Naive thymus-derived CD4-positive, alpha-beta T cell (primary cell): ENCODE measurements at regions of chr18 and their contacts with region 1.

Region 1: GRCh38 chr18:50009773-50010335 is 185.1 kb downstream of the MYO5B start:
- DNase-seq: peak in 7 of 9 donors; percentile 2 to 42 (median 20)
- ATAC-seq: peak; percentile 73
- H3K4me3 ChIP-seq: no peak overlapping the region
- H3K4me3 Mint-ChIP-seq: no peak overlapping the region
- H3K27ac ChIP-seq: no peak overlapping the region
- H3K27ac Mint-ChIP-seq: no peak overlapping the region
- H3K4me1 ChIP-seq: no peaks in the 10 kb centered on the region
- H3K4me1 Mint-ChIP-seq: no peaks in the 10 kb centered on the region
- H3K27me3 ChIP-seq: no peaks in the 10 kb centered on the region
- H3K27me3 Mint-ChIP-seq: peaks cover 0 to 17% (median 0%) of the 10 kb centered on the region in 5 donors

Region 2: DNA sequence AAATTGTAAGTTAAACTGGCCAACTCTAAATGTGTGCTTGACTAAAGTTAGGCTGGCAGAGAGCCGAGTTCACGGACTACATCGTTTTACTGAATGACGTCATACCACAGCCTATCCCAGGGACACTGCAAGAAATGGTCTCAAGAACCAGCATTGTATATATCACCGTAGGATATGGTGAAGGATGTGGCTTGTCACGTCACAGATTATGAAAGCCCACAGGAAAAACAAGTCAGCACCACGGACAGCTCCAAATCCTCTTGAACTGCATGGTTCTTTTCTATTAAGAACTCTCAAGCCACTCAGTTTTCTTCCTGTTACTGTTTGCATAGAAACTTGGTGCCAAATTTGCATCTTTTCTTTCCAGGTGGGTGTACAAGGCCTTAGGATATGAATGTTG is 111.4 kb before region 1 on chr18:
- CTCF ChIA-PET with region 1: no interaction called
- POLR2A ChIA-PET with region 1: no interaction called
- intact Hi-C with region 1: no loop called
- DNase-seq: peak; percentile 18 to 69 (median 56)
- ATAC-seq: peak; percentile 68
- H3K4me3 ChIP-seq: no peak overlapping the region
- H3K4me3 Mint-ChIP-seq: no peak overlapping the region
- H3K27ac ChIP-seq: no peak overlapping the region
- H3K27ac Mint-ChIP-seq: no peak overlapping the region
- H3K4me1 ChIP-seq: no peaks in the 10 kb centered on the region
- H3K4me1 Mint-ChIP-seq: no peaks in the 10 kb centered on the region
- H3K27me3 ChIP-seq: no peaks in the 10 kb centered on the region
- H3K27me3 Mint-ChIP-seq: peaks cover 0 to 18% (median 4%) of the 10 kb centered on the region in 5 donors

Region 3: GRCh38 chr18:50099725-50100407 is 90.0 kb after region 1 on chr18:
- CTCF ChIA-PET with region 1: no interaction called
- POLR2A ChIA-PET with region 1: no interaction called
- intact Hi-C with region 1: no loop called
- DNase-seq: no peak
- ATAC-seq: no peak
- H3K4me3 ChIP-seq: no peak overlapping the region
- H3K4me3 Mint-ChIP-seq: no peak overlapping the region
- H3K27ac ChIP-seq: no peak overlapping the region
- H3K27ac Mint-ChIP-seq: no peak overlapping the region
- H3K4me1 ChIP-seq: no peaks in the 10 kb centered on the region
- H3K4me1 Mint-ChIP-seq: peaks cover 0 to 2% (median 0%) of the 10 kb centered on the region in 7 donors
- H3K27me3 ChIP-seq: no peaks in the 10 kb centered on the region
- H3K27me3 Mint-ChIP-seq: peaks cover 4 to 41% (median 17%) of the 10 kb centered on the region in 5 donors

Region 4: GRCh38 chr18:50194631-50195532 is 185.0 kb after region 1 on chr18 and contains the start of gene MYO5B:
- CTCF ChIA-PET with region 1: no interaction called
- POLR2A ChIA-PET with region 1: no interaction called
- intact Hi-C with region 1: loop called in 1 of 2 experiments (anchors 2 kb)
- DNase-seq: peak in 7 of 9 donors; percentile 29 to 70 (median 42)
- ATAC-seq: peak; percentile 90
- H3K4me3 ChIP-seq: peak within 1 kb of the TSS; percentile 13
- H3K4me3 Mint-ChIP-seq: peak within 1 kb of the TSS; percentile 39 to 82 (median 66)
- H3K27ac ChIP-seq: no peak within 1 kb of the TSS
- H3K27ac Mint-ChIP-seq: peak within 1 kb of the TSS in 1 of 9 donors; percentile 59
- H3K4me1 ChIP-seq: peaks cover 0 to 5% of the 10 kb centered on the region in 2 donors
- H3K4me1 Mint-ChIP-seq: peaks cover 6 to 20% (median 17%) of the 10 kb centered on the region in 7 donors
- H3K27me3 ChIP-seq: peaks cover 0 to 18% of the 10 kb centered on the region in 2 donors
- H3K27me3 Mint-ChIP-seq: peaks cover 62 to 79% (median 72%) of the 10 kb centered on the region in 5 donors
- total RNA-seq, gene MYO5B: not detected

Region 5: GRCh38 chr18:50203801-50204604 is 194.1 kb after region 1 on chr18:
- CTCF ChIA-PET with region 1: no interaction called
- POLR2A ChIA-PET with region 1: no interaction called
- intact Hi-C with region 1: loop called in 1 of 2 experiments (anchors 2 kb)
- DNase-seq: peak in 2 of 9 donors; percentile 17 to 28
- ATAC-seq: no peak
- H3K4me3 ChIP-seq: no peak overlapping the region
- H3K4me3 Mint-ChIP-seq: peak overlapping the region in 6 of 10 donors; percentile 20 to 61 (median 32)
- H3K27ac ChIP-seq: no peak overlapping the region
- H3K27ac Mint-ChIP-seq: no peak overlapping the region
- H3K4me1 ChIP-seq: no peaks in the 10 kb centered on the region
- H3K4me1 Mint-ChIP-seq: peaks cover 5 to 12% (median 9%) of the 10 kb centered on the region in 7 donors
- H3K27me3 ChIP-seq: peaks cover 0 to 3% of the 10 kb centered on the region in 2 donors
- H3K27me3 Mint-ChIP-seq: peaks cover 48 to 61% (median 57%) of the 10 kb centered on the region in 5 donors

Region 6: DNA sequence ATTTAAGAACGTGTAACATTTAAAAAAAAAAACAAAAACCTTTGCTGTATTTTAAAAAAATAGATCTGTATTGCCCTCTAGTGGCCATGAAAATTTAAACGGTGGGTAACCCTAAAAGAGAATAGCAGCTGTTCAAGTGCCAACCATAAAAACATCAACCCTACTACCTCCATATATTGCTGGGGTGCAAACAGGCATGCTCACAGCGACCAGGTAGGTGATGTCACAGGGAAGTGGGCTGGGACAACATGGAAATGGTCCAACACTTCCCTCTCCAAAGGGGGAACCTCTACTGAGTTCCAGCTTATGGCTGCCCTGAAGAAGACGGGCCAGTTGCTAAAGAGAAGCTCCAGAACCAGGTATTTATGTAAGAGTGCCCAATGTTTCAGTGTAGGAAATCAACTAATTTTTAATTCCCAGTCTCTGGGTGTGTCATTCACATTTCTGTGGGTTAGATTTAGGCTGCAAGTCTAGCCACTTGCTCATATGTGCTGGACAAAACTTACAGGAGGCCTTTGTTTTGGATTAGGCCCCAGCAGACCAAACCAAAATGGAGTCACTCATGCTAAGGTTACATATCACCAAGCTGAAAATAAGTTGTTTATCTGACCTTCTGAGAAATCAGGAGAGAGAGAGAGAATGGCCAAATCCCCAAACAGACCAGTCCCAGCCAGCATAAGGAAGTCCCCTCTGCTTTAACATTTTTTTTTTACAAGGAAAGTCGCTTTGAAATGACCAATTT is 419.5 kb after region 1 on chr18:
- CTCF ChIA-PET with region 1: no interaction called
- POLR2A ChIA-PET with region 1: no interaction called
- intact Hi-C with region 1: loop called (anchors 5 kb)
- DNase-seq: peak in 5 of 9 donors; percentile 4 to 16 (median 4)
- ATAC-seq: no peak
- H3K4me3 ChIP-seq: no peak overlapping the region
- H3K4me3 Mint-ChIP-seq: no peak overlapping the region
- H3K27ac ChIP-seq: no peak overlapping the region
- H3K27ac Mint-ChIP-seq: no peak overlapping the region
- H3K4me1 ChIP-seq: no peaks in the 10 kb centered on the region
- H3K4me1 Mint-ChIP-seq: no peaks in the 10 kb centered on the region
- H3K27me3 ChIP-seq: no peaks in the 10 kb centered on the region
- H3K27me3 Mint-ChIP-seq: peaks cover 8 to 19% (median 13%) of the 10 kb centered on the region in 5 donors

Region 7: DNA sequence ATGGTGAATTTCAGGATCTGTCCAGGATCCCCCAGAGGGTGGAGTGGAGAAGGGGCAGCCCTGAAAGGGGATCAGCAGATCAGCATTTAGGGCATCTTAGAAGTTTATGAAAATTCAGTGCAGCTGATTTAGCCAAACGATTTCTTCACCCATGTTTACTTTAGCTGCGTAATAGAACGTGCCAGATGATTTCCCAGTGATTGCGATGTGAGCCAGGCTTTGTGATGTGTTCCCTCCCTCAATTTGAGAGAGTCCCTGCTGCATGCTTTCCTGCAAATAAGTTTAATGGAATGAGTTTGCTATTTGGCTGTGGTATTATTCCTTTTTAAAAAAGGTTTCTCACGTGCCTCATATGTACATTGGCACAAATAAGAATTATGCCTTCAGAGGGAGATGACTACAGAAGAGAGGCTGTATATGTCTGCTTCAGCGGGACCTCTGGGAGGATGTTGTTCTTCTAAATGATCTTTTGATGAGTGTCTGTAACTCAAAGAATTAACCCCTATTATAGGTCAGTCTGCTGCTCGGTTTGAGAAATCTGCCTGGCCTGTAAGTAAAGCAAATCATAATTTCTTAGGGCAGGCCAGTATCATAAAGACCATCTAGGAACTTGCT is 698.1 kb after region 1 on chr18:
- CTCF ChIA-PET with region 1: no interaction called
- POLR2A ChIA-PET with region 1: no interaction called
- intact Hi-C with region 1: no loop called
- DNase-seq: no peak
- ATAC-seq: no peak
- H3K4me3 ChIP-seq: no peak overlapping the region
- H3K4me3 Mint-ChIP-seq: no peak overlapping the region
- H3K27ac ChIP-seq: no peak overlapping the region
- H3K27ac Mint-ChIP-seq: no peak overlapping the region
- H3K4me1 ChIP-seq: no peaks in the 10 kb centered on the region
- H3K4me1 Mint-ChIP-seq: no peaks in the 10 kb centered on the region
- H3K27me3 ChIP-seq: no peaks in the 10 kb centered on the region
- H3K27me3 Mint-ChIP-seq: peaks cover 0 to 8% (median 4%) of the 10 kb centered on the region in 5 donors